Activated naive CD4-positive, alpha-beta T cell treated with anti-CD3 and anti-CD28 coated beads, Interleukin-2, amount 10 ng/mL, durations not matched to agents 7 days and 5 days (primary cell): ENCODE measurements at regions of chr14 and their contacts with region 1.

Region 1: GRCh38 chr14:105045710-105046326 is 19.4 kb downstream of the GPR132 start:
- DNase-seq: peak; percentile 95
- H3K4me3 Mint-ChIP-seq: no peak overlapping the region
- H3K27ac Mint-ChIP-seq: peak overlapping the region; percentile 2
- H3K4me1 Mint-ChIP-seq: peaks cover 15% of the 10 kb centered on the region
- H3K27me3 Mint-ChIP-seq: peaks cover 12% of the 10 kb centered on the region

Region 2: DNA sequence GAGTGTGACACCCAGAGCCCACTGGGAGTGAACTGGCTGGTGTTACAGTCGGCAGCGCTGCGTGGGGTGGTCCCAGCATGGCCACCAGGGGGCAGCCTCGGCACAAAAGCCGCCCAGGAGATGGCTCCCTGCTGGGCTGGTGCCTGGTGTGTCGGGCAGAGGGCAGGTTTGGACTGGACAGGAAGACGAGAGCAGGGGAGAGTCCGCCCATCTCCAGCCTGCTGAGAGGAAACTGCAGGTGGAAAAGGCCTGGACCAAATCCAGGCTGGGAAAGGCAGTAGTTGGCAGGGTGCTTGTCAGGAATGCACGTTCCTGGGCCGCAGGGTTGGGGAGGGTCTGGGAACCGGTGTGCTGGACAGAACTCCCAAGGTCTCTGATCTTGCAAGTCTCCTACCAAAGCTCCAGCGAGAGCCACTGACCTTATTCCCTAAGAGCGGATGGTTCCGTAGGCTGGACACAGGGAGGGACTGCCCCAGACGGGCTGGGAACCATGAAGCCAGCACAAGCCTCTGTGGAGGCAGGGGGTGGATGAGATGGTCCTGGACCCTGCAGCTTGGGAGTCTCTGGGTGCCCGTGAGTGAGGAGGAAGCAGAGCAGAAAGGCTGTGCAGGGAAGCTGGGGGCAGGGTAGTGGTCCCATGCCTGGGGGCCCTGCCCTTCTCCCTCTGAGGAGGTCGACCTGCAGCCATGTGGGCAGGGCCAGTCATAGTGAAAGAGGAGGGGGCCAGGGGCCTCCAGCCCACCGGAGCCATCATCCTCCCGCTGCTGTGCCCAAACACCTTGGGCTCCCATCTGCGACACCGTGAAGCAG is 69.4 kb before region 1 on chr14:
- CTCF ChIA-PET with region 1: interaction called, 122 read pairs
- DNase-seq: peak; percentile 90
- H3K4me3 Mint-ChIP-seq: peak overlapping the region; percentile 61
- H3K27ac Mint-ChIP-seq: no peak overlapping the region
- H3K4me1 Mint-ChIP-seq: peaks cover 8% of the 10 kb centered on the region
- H3K27me3 Mint-ChIP-seq: peaks cover 69% of the 10 kb centered on the region

Region 3: DNA sequence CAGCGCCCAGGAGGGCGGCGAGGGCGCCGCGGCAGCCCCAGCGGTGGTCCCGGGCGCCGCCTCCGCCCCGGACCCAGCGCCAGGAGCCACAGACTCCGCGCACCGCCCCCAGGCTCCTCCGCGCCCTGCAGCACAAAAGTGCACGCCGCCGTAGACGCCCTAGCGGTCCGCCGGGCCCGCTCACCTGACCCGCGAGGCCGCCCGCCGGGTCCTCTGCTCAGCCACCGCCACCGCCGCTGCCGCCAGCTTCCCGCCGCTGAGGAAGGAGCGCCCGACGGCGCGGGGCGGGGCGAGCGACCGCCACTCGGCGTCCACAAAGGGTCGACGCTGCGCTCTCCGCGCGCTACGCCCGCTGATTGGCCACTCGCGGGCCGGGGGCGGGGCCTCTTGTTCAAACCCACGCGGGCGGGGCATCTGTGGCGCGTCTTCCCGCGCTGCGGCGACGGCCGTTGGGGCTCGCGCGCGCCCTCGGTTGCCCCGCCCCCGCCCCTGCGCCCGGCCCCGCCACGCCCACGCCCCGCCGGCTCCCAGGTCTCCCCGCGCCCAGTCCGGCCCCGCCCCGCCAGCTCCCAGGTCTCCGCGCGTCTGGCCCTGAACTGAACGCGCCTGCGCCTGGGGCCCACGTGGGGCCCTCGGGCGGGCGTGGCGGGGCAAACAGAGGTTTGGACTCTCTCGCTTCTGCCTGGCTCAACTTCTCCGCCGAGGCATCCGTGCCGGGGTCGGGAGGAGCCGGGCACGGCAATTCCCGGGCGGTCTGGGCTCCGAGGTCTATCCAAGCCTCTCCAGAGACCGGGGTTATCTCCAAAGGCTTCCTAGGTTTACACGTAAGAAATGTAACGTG is 24.8 kb before region 1 on chr14 and contains the start of gene CDCA4:
- CTCF ChIA-PET with region 1: interaction called, 44 read pairs
- DNase-seq: peak; percentile 96
- H3K4me3 Mint-ChIP-seq: peak within 1 kb of the TSS; percentile 96
- H3K27ac Mint-ChIP-seq: peak within 1 kb of the TSS; percentile 94
- H3K4me1 Mint-ChIP-seq: peaks cover 67% of the 10 kb centered on the region
- H3K27me3 Mint-ChIP-seq: no peaks in the 10 kb centered on the region

Region 4: DNA sequence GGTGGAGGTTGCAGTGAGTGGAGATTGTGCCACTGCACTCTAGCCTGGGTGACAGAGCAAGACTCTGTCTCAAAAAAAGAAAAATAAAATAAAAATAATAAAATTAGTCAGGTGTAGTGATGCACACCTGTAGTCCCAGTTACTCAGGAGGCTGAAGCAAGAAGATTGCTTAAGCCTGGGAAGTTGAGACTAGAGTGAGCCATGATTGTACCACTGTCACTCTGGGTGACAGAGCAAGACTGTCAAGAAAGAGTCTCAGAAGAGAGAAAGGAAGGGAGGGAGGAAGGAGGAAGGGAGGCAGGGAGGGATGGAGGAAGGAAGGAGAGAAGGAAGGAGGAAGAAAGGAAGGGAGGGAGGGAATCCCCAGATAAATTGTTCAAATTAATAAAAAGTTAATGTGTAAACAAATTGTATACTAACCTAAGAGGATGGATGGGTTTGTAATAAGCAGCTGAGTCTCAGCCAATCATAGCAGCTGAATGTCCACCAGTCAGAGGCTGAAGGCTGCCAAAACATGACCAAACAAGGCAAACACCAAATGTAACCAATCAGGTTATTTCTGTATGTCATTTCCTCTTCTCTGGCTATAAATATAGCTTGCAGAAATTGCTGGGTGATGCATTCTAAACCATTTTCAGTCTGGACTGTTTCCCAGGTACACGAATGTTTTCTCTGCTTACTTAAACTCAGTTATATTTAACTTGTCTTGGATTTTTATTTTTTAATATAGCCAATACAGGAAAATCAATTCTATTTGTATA is 18.8 kb before region 1 on chr14:
- CTCF ChIA-PET with region 1: interaction called, 44 read pairs
- DNase-seq: no peak
- H3K4me3 Mint-ChIP-seq: no peak overlapping the region
- H3K27ac Mint-ChIP-seq: no peak overlapping the region
- H3K4me1 Mint-ChIP-seq: peaks cover 34% of the 10 kb centered on the region
- H3K27me3 Mint-ChIP-seq: no peaks in the 10 kb centered on the region

Region 5: DNA sequence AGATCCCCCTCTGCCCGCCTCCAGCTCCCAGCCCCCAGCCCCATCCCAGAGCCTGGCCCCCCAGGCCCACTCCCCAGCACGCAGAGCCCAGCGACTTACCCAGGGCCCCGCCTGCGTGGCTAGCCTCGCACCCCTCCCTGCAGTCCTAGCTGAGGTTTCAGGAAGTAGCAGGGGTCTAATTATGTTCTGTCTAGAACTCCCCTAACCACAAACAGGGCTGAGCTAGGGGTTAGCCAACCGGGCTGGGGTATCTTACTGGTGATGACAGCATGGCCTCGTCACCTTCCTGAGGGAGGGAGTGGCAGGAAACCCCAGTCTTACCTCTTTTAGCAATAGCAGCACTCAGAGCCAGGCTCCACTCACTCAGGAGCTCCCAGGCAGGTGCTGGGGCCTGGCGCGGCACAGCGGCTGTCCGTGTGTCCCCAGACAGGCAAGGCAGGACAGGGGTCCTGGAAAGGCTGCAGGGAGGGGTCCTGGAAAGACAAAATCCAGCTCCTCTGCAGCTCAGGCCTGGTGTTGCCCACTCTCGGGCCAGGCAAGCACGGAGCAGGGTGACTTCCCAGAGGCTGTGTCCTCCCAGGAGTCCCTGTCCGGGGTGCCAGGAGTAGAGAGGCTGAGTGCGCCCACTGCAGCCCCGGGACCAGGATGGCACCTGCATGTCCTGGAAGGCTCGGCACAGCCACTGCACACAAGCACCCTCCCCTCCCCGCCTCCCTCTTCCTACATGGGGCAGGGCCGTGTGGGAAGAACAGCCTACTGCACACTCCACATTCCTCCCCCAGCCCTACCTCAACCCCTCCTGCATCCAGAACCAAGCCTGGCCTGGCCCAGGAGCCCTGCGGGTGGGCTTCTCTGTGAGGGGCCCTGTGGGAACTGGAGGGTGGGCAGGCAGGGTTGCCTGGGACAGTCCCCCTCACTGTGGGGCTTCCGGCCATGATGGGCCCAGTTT is 19.7 kb after region 1 on chr14 and contains the start of gene GPR132:
- CTCF ChIA-PET with region 1: interaction called, 12 read pairs
- DNase-seq: peak; percentile 96
- H3K4me3 Mint-ChIP-seq: peak within 1 kb of the TSS; percentile 83
- H3K27ac Mint-ChIP-seq: peak within 1 kb of the TSS; percentile 96
- H3K4me1 Mint-ChIP-seq: peaks cover 91% of the 10 kb centered on the region
- H3K27me3 Mint-ChIP-seq: no peaks in the 10 kb centered on the region